HCT116 (cell line): ENCODE measurements at regions of chr6 and their contacts with region 1.

Region 1: GRCh38 chr6:100678027-100678426 is 203.1 kb downstream of the ASCC3 start:
- DNase-seq: no peak
- ATAC-seq: no peak
- H3K4me3 ChIP-seq: no peak overlapping the region
- H3K27ac ChIP-seq: no peak overlapping the region
- H3K4me1 ChIP-seq: no peaks in the 10 kb centered on the region
- H3K27me3 ChIP-seq: no peaks in the 10 kb centered on the region
- CTCF ChIP-seq: no peak; a peak in 1 of 6 replicates
- POLR2A ChIP-seq: no peak
- RAD21 ChIP-seq: peak; percentile 40

Region 2: GRCh38 chr6:100283283-100283682 is 394.7 kb before region 1 on chr6:
- CTCF ChIA-PET with region 1: no interaction called
- POLR2A ChIA-PET with region 1: no interaction called
- RAD21 ChIA-PET with region 1: no interaction called
- intact Hi-C with region 1: no loop called
- DNase-seq: peak; percentile 75
- ATAC-seq: peak; percentile 98
- H3K4me3 ChIP-seq: no peak overlapping the region; a peak in 1 of 4 replicates
- H3K27ac ChIP-seq: no peak overlapping the region; the same call in 1 of the 2 replicates
- H3K4me1 ChIP-seq: peaks cover 17 to 24% of the 10 kb centered on the region in 2 experiments
- H3K27me3 ChIP-seq: no peaks in the 10 kb centered on the region
- CTCF ChIP-seq: no peak
- POLR2A ChIP-seq: no peak
- RAD21 ChIP-seq: peak; percentile 19; the same call in 1 of the 2 replicates

Region 3: DNA sequence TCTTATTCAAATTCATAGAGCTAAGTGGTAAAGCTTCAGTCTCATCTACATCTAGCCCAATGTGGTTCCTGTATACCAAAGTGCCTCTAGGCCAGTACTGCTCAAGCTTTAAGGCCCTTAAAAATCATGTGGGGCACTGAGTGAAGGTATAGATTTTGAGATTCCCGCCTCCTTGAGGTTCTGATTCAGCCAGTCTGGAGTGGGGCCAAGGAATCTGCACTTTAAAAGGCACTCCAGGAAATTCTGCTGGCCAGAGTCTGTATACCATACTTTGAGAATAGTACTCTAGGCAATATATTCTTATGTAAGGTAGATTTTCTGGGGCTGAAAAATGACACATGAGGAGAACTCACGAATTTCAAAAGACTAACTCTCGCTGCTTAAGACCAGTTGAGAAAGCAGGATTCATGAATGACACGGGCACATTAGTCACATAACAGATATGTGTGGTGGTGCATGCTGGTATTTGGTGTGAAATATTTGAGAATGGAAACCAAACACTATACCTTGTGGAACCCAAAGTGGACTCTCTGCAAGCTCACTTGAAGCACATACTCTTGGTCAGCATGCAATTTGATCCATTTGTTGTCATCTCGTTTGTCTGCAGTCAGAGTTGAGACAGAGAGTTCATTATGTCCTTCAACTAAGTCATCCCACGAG is 165.7 kb before region 1 on chr6:
- CTCF ChIA-PET with region 1: no interaction called
- POLR2A ChIA-PET with region 1: no interaction called
- RAD21 ChIA-PET with region 1: no interaction called
- intact Hi-C with region 1: no loop called
- DNase-seq: no peak
- ATAC-seq: peak; percentile 49; the same call in 1 of the 2 replicates
- H3K4me3 ChIP-seq: no peak overlapping the region
- H3K27ac ChIP-seq: no peak overlapping the region
- H3K4me1 ChIP-seq: peaks cover 0 to 10% of the 10 kb centered on the region in 2 experiments; a peak in 2 of 4 replicates
- H3K27me3 ChIP-seq: no peaks in the 10 kb centered on the region
- CTCF ChIP-seq: no peak
- POLR2A ChIP-seq: no peak
- RAD21 ChIP-seq: no peak

Region 4: GRCh38 chr6:100740439-100740838 is 62.4 kb after region 1 on chr6:
- CTCF ChIA-PET with region 1: no interaction called
- POLR2A ChIA-PET with region 1: no interaction called
- RAD21 ChIA-PET with region 1: no interaction called
- intact Hi-C with region 1: no loop called
- DNase-seq: no peak
- ATAC-seq: no peak
- H3K4me3 ChIP-seq: no peak overlapping the region
- H3K27ac ChIP-seq: no peak overlapping the region
- H3K4me1 ChIP-seq: no peaks in the 10 kb centered on the region
- H3K27me3 ChIP-seq: no peaks in the 10 kb centered on the region
- CTCF ChIP-seq: no peak
- POLR2A ChIP-seq: no peak
- RAD21 ChIP-seq: no peak

Region 5: DNA sequence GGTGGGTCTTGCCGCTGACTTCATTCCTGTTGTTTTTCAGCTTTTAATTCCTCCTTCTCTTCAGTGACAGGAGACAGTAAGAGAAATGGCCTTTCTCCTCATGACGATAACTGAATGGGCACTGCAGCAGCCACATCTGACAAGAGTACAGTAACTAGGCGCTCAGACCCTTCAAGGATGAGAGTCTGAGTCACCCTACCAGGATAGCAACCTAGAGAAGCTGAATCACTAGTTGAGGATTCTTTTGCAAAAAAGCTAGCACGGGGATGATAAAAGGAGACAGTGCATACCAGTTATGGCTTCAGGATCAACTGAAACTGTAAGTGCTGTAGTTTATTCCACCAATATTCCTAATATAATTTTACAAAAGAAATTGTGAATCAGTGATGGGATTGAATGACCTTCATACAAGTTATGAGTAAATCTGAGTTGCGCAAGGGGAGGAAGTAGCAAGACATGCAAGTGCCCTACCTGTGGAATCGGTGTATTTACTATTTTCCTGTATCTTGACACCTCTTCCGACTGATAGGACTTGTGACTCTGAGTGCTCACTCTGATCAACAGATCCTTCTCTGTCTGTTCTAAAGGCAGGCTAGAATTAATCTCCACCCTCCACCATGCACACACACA is 553.7 kb after region 1 on chr6:
- CTCF ChIA-PET with region 1: no interaction called
- POLR2A ChIA-PET with region 1: no interaction called
- RAD21 ChIA-PET with region 1: no interaction called
- intact Hi-C with region 1: loop called (anchors 10 kb)
- DNase-seq: no peak
- ATAC-seq: no peak
- H3K4me3 ChIP-seq: no peak overlapping the region
- H3K27ac ChIP-seq: no peak overlapping the region
- H3K4me1 ChIP-seq: no peaks in the 10 kb centered on the region
- H3K27me3 ChIP-seq: no peaks in the 10 kb centered on the region
- CTCF ChIP-seq: no peak
- POLR2A ChIP-seq: no peak
- RAD21 ChIP-seq: no peak